ENCODE measurements at regions of chr1 and their contacts with region 1.

Region 1: GRCh38 chr1:201999625-202000238 is 10.7 kb upstream of the ELF3 start:
- H3K4me3 ChIP-seq: no peak overlapping the region
- H3K27ac ChIP-seq: no peak overlapping the region
- H3K4me1 ChIP-seq: no peaks in the 10 kb centered on the region
- CTCF ChIP-seq: peak; percentile 53

Region 2: DNA sequence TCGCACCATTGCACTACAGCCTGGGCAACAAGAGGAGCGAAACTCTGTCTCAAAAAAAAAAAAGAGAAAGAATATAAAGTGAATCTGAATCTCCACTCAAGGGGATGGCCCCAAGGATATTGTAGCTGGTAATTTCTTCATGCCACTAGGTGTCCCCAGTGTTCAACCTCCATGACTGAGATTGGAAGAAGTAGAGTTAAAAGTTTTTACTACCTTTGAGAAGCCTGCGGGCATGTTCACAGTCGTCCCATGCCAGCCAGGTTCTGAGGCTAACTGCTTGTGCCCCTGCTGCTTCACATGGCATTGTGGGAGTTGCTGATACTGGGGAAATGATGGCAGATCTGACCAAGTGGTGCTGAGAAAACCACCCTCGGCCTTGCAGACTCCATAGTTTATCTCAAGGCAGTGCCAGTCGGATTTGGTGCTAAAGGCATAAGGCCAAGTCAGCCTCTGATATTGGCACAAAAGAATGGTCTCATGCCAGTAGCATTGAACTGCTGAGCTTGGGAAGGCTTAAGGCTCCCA is 121.8 kb before region 1 on chr1:
- CTCF ChIA-PET with region 1: interaction called, 12 read pairs
- POLR2A ChIA-PET with region 1: no interaction called
- H3K4me3 ChIP-seq: no peak overlapping the region
- H3K27ac ChIP-seq: no peak overlapping the region
- H3K4me1 ChIP-seq: no peaks in the 10 kb centered on the region
- CTCF ChIP-seq: peak; percentile 47; the same call in 1 of the 2 replicates

Region 3: DNA sequence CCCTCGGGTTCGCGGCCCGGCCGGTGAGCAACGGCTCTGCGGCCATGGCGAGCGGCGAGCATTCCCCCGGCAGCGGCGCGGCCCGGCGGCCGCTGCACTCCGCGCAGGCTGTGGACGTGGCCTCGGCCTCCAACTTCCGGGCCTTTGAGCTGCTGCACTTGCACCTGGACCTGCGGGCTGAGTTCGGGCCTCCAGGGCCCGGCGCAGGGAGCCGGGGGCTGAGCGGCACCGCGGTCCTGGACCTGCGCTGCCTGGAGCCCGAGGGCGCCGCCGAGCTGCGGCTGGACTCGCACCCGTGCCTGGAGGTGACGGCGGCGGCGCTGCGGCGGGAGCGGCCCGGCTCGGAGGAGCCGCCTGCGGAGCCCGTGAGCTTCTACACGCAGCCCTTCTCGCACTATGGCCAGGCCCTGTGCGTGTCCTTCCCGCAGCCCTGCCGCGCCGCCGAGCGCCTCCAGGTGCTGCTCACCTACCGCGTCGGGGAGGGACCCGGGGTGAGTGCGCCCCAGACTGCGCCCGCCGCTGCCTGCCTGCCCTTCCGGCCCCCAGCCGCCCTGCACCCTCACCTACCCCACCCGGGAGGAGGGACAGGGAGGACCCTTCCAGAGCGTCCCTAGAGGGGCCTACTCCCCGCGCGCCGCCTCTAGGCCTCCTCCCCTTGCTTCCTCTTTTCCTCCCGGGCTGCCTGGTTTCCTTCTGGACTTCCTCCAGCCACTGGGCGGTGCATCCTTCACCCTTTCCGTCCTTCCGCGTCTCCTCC is 16.9 kb before region 1 on chr1 and contains the start of gene RNPEP:
- CTCF ChIA-PET with region 1: interaction called, 14 read pairs
- POLR2A ChIA-PET with region 1: interaction called, 7 read pairs
- H3K4me3 ChIP-seq: peak within 1 kb of the TSS; percentile 87
- H3K27ac ChIP-seq: peak within 1 kb of the TSS; percentile 96
- H3K4me1 ChIP-seq: no peaks in the 10 kb centered on the region
- CTCF ChIP-seq: peak; percentile 95

Region 4: GRCh38 chr1:202090997-202091396 is 91.3 kb after region 1 on chr1:
- CTCF ChIA-PET with region 1: interaction called, 10 read pairs
- POLR2A ChIA-PET with region 1: no interaction called
- H3K4me3 ChIP-seq: no peak overlapping the region
- H3K27ac ChIP-seq: no peak overlapping the region
- H3K4me1 ChIP-seq: no peaks in the 10 kb centered on the region
- CTCF ChIP-seq: peak; percentile 66

Region 5: GRCh38 chr1:202122639-202123335 is 123.1 kb after region 1 on chr1 and contains the start of gene GPR37L1:
- CTCF ChIA-PET with region 1: interaction called, 159 read pairs
- POLR2A ChIA-PET with region 1: interaction called, 3 read pairs
- H3K4me3 ChIP-seq: no peak within 1 kb of the TSS
- H3K27ac ChIP-seq: no peak within 1 kb of the TSS
- H3K4me1 ChIP-seq: no peaks in the 10 kb centered on the region
- CTCF ChIP-seq: peak; percentile 24; the same call in 1 of the 2 replicates

Region 6: GRCh38 chr1:202235856-202236837 is 236.4 kb after region 1 on chr1:
- CTCF ChIA-PET with region 1: no interaction called
- POLR2A ChIA-PET with region 1: no interaction called
- H3K4me3 ChIP-seq: peak overlapping the region; percentile 1; the same call in 1 of the 2 replicates
- H3K27ac ChIP-seq: no peak overlapping the region; the same call in 1 of the 2 replicates
- H3K4me1 ChIP-seq: peaks cover 5% of the 10 kb centered on the region; the same call in 1 of the 2 replicates
- CTCF ChIP-seq: peak; percentile 74

Measured in HEK293 (cell line).